ENCODE measurements at regions of chr2 and their contacts with region 1.

Region 1: DNA sequence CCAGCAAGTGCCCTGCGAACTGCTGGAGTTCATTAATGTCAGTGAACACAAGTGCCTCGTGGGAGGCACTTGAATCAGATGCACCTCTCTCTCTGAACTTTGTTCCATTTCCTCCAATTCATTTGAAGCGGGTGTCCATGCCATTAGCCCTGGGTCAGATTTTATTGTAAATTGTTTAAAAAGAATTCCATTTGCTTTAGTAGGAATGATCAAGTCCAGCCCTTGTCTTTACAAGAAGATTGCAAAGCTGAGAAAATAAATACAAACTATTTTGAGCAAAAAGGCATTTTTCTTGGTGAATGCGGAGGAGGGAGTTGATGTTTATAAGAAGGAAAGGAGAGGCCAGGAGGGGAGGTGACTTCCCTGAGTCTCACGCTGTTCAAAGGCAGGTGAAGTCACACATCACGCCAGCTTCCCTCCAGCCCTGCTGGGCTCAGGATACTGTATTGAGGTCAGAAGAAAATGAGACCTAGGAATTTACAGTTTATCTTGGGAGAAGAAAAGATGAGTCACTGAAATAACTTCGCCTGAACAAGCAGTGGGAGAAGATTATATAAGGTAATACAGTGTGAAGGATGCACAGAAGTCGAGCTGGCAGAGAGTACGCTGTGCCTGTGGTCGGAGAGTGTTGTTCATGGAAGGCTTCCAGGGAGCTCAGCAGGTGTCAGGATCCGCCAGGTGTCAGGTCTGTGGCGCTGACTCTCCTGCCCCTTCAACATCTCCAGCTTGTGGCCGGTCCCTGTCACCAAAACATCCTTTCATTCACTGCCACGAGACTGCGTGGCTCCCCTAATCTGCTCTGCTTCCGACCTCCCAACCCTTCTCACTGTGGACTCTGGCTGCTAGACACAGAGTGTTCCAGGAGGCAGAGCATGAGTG is 36.5 kb downstream of the EFR3B start:
- DNase-seq: peak; percentile 90
- H3K4me3 ChIP-seq: no peak overlapping the region
- H3K27ac ChIP-seq: no peak overlapping the region
- H3K4me1 ChIP-seq: no peaks in the 10 kb centered on the region
- H3K27me3 ChIP-seq: peaks cover 49% of the 10 kb centered on the region
- CTCF ChIP-seq: peak in 1 of 2 donors; percentile 16

Region 2: GRCh38 chr2:24153478-24153877 is 924.9 kb before region 1 on chr2:
- CTCF ChIA-PET with region 1: no interaction called
- dilution Hi-C with region 1: no loop called
- in situ Hi-C with region 1: no loop called
- intact Hi-C with region 1: no loop called
- DNase-seq: no peak
- H3K4me3 ChIP-seq: no peak overlapping the region
- H3K27ac ChIP-seq: no peak overlapping the region
- H3K4me1 ChIP-seq: no peaks in the 10 kb centered on the region
- H3K27me3 ChIP-seq: no peaks in the 10 kb centered on the region
- CTCF ChIP-seq: no peak

Region 3: DNA sequence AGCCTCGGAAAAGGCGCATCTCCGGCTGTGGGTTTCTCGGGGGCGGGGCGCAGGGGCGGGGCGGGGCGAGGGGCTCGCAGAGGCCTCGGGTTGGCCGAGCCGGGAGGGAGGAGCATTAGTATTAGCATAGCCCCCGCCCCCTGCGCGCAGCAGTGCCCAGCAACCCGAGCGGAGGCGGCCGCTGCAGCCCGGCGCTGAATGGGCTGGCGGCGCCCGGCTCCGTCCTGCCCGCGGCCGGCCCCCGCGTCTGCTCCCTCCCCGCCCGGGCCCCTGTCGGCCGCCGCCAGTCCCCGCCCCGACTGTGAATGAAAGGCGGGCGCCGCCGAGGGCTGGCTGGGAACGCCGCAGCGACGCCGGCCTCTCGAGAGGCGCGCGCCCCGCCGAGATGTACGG is 36.5 kb before region 1 on chr2 and contains the start of gene EFR3B:
- CTCF ChIA-PET with region 1: no interaction called
- dilution Hi-C with region 1: loop called (anchors 5 kb)
- in situ Hi-C with region 1: no loop called
- intact Hi-C with region 1: loop called (anchors 1 kb)
- DNase-seq: peak; percentile 89
- H3K4me3 ChIP-seq: peak within 1 kb of the TSS; percentile 37 to 59 (median 53)
- H3K27ac ChIP-seq: no peak within 1 kb of the TSS
- H3K4me1 ChIP-seq: peaks cover 12% of the 10 kb centered on the region
- H3K27me3 ChIP-seq: peaks cover 18% of the 10 kb centered on the region
- CTCF ChIP-seq: no peak
- total RNA-seq, gene EFR3B: under 0.01 to 0.05 TPM

Measured in mammary epithelial cell (primary cell).